CD4-positive, alpha-beta memory T cell (primary cell): ENCODE measurements at regions of chr3 and their contacts with region 1.

Region 1: GRCh38 chr3:115692887-115693524 is 69.7 kb downstream of the GAP43 start:
- DNase-seq: peak; percentile 51 to 68 (median 56)
- H3K4me3 ChIP-seq: no peak overlapping the region
- H3K4me3 Mint-ChIP-seq: no peak overlapping the region
- H3K27ac ChIP-seq: no peak overlapping the region
- H3K27ac Mint-ChIP-seq: peak overlapping the region in 1 of 7 donors; percentile 27
- H3K4me1 ChIP-seq: no peaks in the 10 kb centered on the region
- H3K4me1 Mint-ChIP-seq: peaks cover 0 to 3% (median 0%) of the 10 kb centered on the region in 4 donors
- H3K27me3 ChIP-seq: no peaks in the 10 kb centered on the region
- H3K27me3 Mint-ChIP-seq: no peaks in the 10 kb centered on the region

Region 2: GRCh38 chr3:114827495-114827894 is 865.5 kb before region 1 on chr3:
- CTCF ChIA-PET with region 1: no interaction called
- POLR2A ChIA-PET with region 1: no interaction called
- intact Hi-C with region 1: loop called (anchors 10 kb)
- DNase-seq: peak in 4 of 5 donors; percentile 1 to 9 (median 4)
- H3K4me3 ChIP-seq: no peak overlapping the region
- H3K4me3 Mint-ChIP-seq: no peak overlapping the region
- H3K27ac ChIP-seq: no peak overlapping the region
- H3K27ac Mint-ChIP-seq: no peak overlapping the region
- H3K4me1 ChIP-seq: no peaks in the 10 kb centered on the region
- H3K4me1 Mint-ChIP-seq: peaks cover 0 to 4% (median 2%) of the 10 kb centered on the region in 4 donors
- H3K27me3 ChIP-seq: no peaks in the 10 kb centered on the region
- H3K27me3 Mint-ChIP-seq: no peaks in the 10 kb centered on the region

Region 3: GRCh38 chr3:115092220-115092791 is 600.7 kb before region 1 on chr3:
- CTCF ChIA-PET with region 1: interaction called, 9 read pairs
- POLR2A ChIA-PET with region 1: no interaction called
- intact Hi-C with region 1: loop called (anchors 1 kb)
- DNase-seq: peak; percentile 43 to 62 (median 48)
- H3K4me3 ChIP-seq: no peak overlapping the region
- H3K4me3 Mint-ChIP-seq: no peak overlapping the region
- H3K27ac ChIP-seq: no peak overlapping the region
- H3K27ac Mint-ChIP-seq: no peak overlapping the region
- H3K4me1 ChIP-seq: peaks cover 4% of the 10 kb centered on the region
- H3K4me1 Mint-ChIP-seq: peaks cover 12 to 20% (median 16%) of the 10 kb centered on the region in 4 donors
- H3K27me3 ChIP-seq: no peaks in the 10 kb centered on the region
- H3K27me3 Mint-ChIP-seq: no peaks in the 10 kb centered on the region

Region 4: GRCh38 chr3:115169808-115170207 is 523.2 kb before region 1 on chr3:
- CTCF ChIA-PET with region 1: interaction called, 3 read pairs
- POLR2A ChIA-PET with region 1: no interaction called
- intact Hi-C with region 1: loop called (anchors 2 kb)
- DNase-seq: peak in 4 of 5 donors; percentile 16 to 40 (median 27)
- H3K4me3 ChIP-seq: no peak overlapping the region
- H3K4me3 Mint-ChIP-seq: no peak overlapping the region
- H3K27ac ChIP-seq: no peak overlapping the region
- H3K27ac Mint-ChIP-seq: no peak overlapping the region
- H3K4me1 ChIP-seq: peaks cover 14% of the 10 kb centered on the region
- H3K4me1 Mint-ChIP-seq: peaks cover 12 to 13% (median 12%) of the 10 kb centered on the region in 4 donors
- H3K27me3 ChIP-seq: no peaks in the 10 kb centered on the region
- H3K27me3 Mint-ChIP-seq: no peaks in the 10 kb centered on the region

Region 5: DNA sequence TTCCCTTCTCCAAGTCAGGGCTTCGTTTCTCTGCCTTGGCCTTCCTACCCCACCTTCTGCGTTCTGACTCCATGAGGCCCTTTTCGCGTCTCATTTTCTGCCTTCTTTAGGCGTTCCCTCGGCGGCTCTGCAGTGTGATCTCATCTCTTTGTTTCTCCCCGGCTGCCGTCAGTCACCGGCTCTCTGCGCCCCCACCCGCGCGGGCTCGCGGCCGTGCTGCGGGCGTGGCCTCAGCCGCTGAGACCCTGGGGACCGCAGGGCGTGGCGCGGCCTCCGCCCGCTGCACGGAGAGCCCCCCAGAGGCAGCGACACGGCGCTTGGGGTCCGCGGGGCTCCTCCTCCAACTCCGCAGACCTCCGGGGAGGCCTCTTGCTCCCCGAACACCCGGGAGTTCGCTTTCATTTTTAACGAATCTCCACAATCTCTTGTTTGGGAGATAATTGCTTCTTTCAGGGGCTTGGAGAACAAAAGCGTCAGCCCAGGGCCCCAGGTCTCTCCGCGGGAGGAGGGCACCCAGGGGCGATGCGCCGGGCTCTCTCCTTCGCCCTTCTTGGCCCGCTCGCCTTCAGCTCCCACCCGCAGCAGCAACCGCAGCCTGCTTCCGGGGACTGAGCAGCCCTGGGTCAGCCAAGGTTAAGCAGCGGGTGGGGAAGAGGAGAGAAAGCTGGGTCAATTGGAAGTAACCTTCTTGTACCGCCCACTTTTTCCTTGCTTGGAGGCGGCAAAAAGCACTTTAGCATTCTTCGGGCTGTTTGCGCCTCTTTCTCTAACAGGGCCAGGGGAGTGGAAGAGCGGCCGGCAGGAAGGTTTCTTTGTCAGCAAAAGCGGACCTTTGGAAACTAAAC is 34.4 kb before region 1 on chr3:
- CTCF ChIA-PET with region 1: interaction called, 7 read pairs
- POLR2A ChIA-PET with region 1: no interaction called
- intact Hi-C with region 1: loop called (anchors 2 kb)
- DNase-seq: peak; percentile 62 to 76 (median 73)
- H3K4me3 ChIP-seq: peak overlapping the region; percentile 61
- H3K4me3 Mint-ChIP-seq: peak overlapping the region; percentile 91 to 98 (median 95)
- H3K27ac ChIP-seq: peak overlapping the region; percentile 61
- H3K27ac Mint-ChIP-seq: peak overlapping the region; percentile 83 to 100 (median 99)
- H3K4me1 ChIP-seq: peaks cover 28% of the 10 kb centered on the region
- H3K4me1 Mint-ChIP-seq: peaks cover 16 to 32% (median 21%) of the 10 kb centered on the region in 4 donors
- H3K27me3 ChIP-seq: no peaks in the 10 kb centered on the region
- H3K27me3 Mint-ChIP-seq: no peaks in the 10 kb centered on the region